ENCODE measurements at regions of chr9 and their contacts with region 1.

Region 1: DNA sequence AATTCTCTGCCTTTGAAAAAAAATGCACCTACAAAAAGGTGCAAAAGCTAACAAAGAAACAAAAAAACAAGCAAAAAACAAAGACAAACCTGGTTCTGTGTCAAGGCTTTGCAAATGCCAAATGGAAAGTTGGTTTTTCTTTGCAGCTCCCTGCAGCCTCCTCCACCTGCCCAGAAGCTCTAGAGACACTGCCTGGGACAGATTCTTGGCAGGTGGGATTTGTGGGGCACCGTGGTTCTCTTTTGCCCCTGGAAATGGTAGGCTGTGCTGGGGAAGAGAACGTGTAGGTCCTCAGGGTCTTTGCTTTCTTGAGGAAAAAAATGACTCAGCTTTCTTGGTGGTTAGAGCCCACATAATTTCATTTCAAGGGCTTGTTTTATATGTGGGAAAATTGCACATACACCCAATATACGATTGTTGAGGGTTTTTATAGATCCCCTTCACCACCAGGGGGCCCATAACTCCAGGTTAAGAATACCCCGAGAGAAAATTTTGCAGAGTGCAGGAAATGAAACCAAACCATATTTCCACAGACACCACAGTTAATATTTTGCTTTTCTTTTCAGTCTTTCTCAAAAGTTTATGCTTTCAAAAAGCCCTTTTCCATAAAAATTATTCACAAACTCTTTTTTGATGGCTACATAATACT is 58.7 kb downstream of the NXNL2 start:
- DNase-seq: peak; percentile 62
- H3K4me3 ChIP-seq: peak overlapping the region in 1 of 2 experiments; percentile 38; a peak in 1 of 4 replicates
- H3K27ac ChIP-seq: no peak overlapping the region
- H3K4me1 ChIP-seq: no peaks in the 10 kb centered on the region
- H3K27me3 ChIP-seq: no peaks in the 10 kb centered on the region
- CTCF ChIP-seq: peak; percentile 79
- EP300 ChIP-seq: no peak
- RAD21 ChIP-seq: peak; percentile 89

Region 2: GRCh38 chr9:88544241-88544640 is 49.4 kb before region 1 on chr9:
- CTCF ChIA-PET with region 1: no interaction called
- POLR2A ChIA-PET with region 1: no interaction called
- DNase-seq: no peak
- H3K4me3 ChIP-seq: no peak overlapping the region
- H3K27ac ChIP-seq: no peak overlapping the region
- H3K4me1 ChIP-seq: no peaks in the 10 kb centered on the region
- H3K27me3 ChIP-seq: no peaks in the 10 kb centered on the region
- CTCF ChIP-seq: no peak
- EP300 ChIP-seq: no peak
- RAD21 ChIP-seq: no peak

Region 3: DNA sequence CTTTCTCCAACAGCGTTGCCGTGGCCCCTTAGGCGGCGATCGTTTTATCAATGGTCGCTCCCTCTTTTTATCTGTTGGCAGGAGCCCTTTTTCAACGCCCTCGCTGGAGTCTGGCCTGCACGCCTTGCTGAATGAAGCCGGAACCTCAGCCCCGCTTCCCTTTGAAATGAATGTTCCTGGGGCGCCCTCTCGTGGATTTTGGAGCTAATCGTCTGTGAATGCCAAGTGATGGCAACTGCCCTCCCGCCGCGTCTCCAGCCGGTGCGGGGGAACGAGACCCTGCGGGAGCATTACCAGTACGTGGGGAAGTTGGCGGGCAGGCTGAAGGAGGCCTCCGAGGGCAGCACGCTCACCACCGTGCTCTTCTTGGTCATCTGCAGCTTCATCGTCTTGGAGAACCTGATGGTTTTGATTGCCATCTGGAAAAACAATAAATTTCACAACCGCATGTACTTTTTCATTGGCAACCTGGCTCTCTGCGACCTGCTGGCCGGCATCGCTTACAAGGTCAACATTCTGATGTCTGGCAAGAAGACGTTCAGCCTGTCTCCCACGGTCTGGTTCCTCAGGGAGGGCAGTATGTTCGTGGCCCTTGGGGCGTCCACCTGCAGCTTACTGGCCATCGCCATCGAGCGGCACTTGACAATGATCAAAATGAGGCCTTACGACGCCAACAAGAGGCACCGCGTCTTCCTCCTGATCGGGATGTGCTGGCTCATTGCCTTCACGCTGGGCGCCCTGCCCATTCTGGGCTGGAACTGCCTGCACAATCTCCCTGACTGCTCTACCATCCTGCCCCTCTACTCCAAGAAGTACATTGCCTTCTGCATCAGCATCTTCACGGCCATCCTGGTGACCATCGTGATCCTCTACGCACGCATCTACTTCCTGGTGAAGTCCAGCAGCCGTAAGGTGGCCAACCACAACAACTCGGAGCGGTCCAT is 407.6 kb after region 1 on chr9:
- CTCF ChIA-PET with region 1: interaction called, 16 read pairs
- POLR2A ChIA-PET with region 1: no interaction called
- DNase-seq: peak; percentile 86
- H3K4me3 ChIP-seq: peak overlapping the region in 1 of 2 experiments; percentile 19; a peak in 2 of 4 replicates
- H3K27ac ChIP-seq: peak overlapping the region; percentile 37 to 92
- H3K4me1 ChIP-seq: peaks cover 23 to 50% of the 10 kb centered on the region in 2 experiments
- H3K27me3 ChIP-seq: no peaks in the 10 kb centered on the region
- CTCF ChIP-seq: peak; percentile 76
- EP300 ChIP-seq: peak in 1 of 2 experiments; percentile 54; a peak in 1 of 4 replicates
- RAD21 ChIP-seq: peak; percentile 95